ENCODE measurements at regions of chr10 and their contacts with region 1.

Region 1: DNA sequence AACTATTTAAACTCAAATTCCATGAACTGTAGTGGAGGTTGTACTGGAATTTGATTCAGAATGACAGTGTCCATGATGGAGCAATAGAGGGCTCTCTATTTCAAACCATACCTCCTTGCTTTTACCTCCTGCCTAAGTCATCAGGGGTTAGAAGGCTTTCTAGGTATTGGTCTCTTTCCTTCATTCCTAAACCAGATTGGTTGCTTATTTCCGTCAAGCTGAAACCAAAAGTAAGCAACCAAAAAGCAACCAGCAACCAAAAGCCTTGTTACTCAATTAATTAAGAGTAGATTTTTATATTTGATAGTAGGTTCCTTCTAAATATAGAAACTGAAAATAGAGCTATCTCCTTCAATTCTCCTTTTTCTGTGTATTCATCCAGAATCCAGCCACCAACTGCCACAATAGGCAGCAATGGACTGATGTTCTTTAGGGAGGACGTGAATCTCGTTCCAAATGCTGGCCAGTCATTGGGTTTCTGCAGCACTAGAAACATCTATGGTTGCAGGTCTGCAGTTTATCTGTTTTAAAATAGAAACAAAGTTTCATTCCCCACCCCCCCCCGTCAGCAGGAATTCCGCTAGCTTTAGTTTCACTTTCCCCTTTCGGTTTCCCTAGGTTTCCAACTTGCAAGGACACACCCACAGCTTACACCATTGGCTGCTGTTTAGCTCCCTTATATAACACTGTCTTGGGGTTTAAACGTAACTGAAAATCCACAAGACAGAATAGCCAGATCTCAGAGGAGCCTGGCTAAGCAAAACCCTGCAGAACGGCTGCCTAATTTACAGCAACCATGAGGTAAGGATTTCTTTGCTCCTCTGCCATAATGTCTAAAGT is at the start of gene IFIT1:
- DNase-seq: peak; percentile 75
- ATAC-seq: peak; percentile 87
- H3K4me3 ChIP-seq: peak within 1 kb of the TSS; percentile 78
- H3K27ac ChIP-seq: peak within 1 kb of the TSS; percentile 13
- H3K4me1 ChIP-seq: peaks cover 18% of the 10 kb centered on the region
- H3K27me3 ChIP-seq: no peaks in the 10 kb centered on the region
- CTCF ChIP-seq: peak; percentile 18; the same call in 1 of the 2 replicates
- total RNA-seq, gene IFIT1: 14.1 and 19.6 TPM in 2 replicates

Region 2: GRCh38 chr10:89114846-89115625 is 277.1 kb before region 1 on chr10:
- CTCF ChIA-PET with region 1: no interaction called
- POLR2A ChIA-PET with region 1: no interaction called
- intact Hi-C with region 1: no loop called
- DNase-seq: no peak
- ATAC-seq: no peak
- H3K4me3 ChIP-seq: no peak overlapping the region
- H3K27ac ChIP-seq: no peak overlapping the region
- H3K4me1 ChIP-seq: no peaks in the 10 kb centered on the region
- H3K27me3 ChIP-seq: no peaks in the 10 kb centered on the region
- CTCF ChIP-seq: no peak

Region 3: DNA sequence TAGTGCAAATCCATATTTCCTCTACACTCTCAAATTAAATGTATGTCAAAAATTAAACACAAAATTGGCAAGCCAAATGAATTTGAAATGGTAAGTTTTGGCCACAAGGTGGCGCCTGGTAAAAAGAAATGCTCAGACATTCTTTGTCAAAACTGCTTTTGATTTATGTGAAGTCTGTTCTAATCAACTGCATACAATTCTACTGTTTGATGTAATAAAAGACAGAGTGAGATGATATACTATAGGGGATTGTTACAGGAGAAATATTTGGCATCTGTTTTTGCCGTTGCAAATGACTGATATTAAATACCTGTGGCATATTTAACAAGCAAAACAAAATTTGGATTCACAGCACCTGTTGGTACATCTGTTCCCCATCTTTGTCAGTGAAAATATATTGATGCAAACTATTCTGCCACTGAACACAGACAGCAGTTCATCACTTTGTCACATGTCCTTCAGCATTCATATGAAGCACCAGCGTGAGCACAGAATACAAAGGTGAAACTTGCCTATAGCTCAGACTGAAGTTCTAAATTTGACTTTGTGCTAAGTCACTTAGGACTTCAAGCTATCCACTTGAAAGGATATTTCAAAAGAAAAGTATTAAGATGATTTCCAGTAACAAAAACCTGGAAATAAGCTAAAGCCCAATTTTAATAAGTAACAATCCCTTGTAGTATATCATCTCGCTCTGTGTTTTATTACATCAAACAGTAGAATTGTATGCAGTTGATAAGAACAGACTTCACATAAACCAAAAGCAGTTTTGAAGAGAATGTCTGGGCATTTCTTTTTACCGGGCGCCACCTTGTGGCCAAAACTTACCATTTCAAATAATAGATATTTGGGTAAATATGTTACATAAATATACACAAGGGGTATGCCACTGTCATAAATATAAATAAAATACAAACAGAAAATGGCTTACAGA is 174.8 kb before region 1 on chr10:
- CTCF ChIA-PET with region 1: no interaction called
- POLR2A ChIA-PET with region 1: interaction called, 9 read pairs
- intact Hi-C with region 1: loop called (anchors 1 kb)
- DNase-seq: peak; percentile 73
- ATAC-seq: peak; percentile 43; the same call in 1 of the 2 replicates
- H3K4me3 ChIP-seq: no peak overlapping the region
- H3K27ac ChIP-seq: no peak overlapping the region
- H3K4me1 ChIP-seq: peaks cover 6% of the 10 kb centered on the region; the same call in 1 of the 2 replicates
- H3K27me3 ChIP-seq: no peaks in the 10 kb centered on the region
- CTCF ChIP-seq: peak; percentile 75

Region 4: DNA sequence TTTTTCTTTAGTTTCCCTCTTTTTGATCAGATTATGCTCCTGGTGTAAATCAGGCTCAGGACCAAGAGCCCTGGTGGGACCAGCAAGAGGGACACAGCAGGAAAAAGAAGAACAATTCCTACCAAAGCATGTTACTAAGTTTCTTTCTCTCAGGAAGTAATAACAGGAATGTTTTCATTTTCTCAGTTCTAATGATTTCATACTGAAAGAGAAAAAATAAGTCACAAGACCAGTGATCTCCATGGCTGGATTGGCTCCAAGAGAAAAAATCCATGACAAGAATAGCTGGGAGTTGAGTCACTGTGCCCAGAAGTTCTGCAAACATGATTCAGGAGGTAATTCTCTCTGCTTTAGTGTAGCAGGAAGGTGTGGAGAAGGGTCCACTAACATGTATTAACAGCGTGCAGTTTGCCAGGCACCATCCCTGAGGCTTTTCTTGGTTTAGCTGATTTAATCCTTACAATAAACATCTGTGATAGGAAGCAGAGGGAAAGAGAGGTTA is 114.1 kb before region 1 on chr10:
- CTCF ChIA-PET with region 1: interaction called, 17 read pairs
- POLR2A ChIA-PET with region 1: no interaction called
- intact Hi-C with region 1: no loop called
- DNase-seq: peak; percentile 98
- ATAC-seq: peak; percentile 85
- H3K4me3 ChIP-seq: peak overlapping the region; percentile 28; the same call in 1 of the 2 replicates
- H3K27ac ChIP-seq: peak overlapping the region; percentile 96
- H3K4me1 ChIP-seq: peaks cover 71% of the 10 kb centered on the region
- H3K27me3 ChIP-seq: no peaks in the 10 kb centered on the region
- CTCF ChIP-seq: no peak

Region 5: GRCh38 chr10:89301721-89302445 is 90.3 kb before region 1 on chr10 and contains the start of gene IFIT2:
- CTCF ChIA-PET with region 1: no interaction called
- POLR2A ChIA-PET with region 1: no interaction called
- intact Hi-C with region 1: loop called (anchors 5 kb)
- DNase-seq: peak; percentile 71
- ATAC-seq: peak; percentile 67
- H3K4me3 ChIP-seq: peak within 1 kb of the TSS; percentile 66
- H3K27ac ChIP-seq: peak within 1 kb of the TSS; percentile 79
- H3K4me1 ChIP-seq: peaks cover 30% of the 10 kb centered on the region
- H3K27me3 ChIP-seq: no peaks in the 10 kb centered on the region
- CTCF ChIP-seq: no peak
- total RNA-seq, gene IFIT2: 6.9 and 8.6 TPM in 2 replicates

Region 6: GRCh38 chr10:89363729-89364442 is 28.3 kb before region 1 on chr10:
- CTCF ChIA-PET with region 1: interaction called, 12 read pairs
- POLR2A ChIA-PET with region 1: interaction called, 22 read pairs
- intact Hi-C with region 1: loop called (anchors 1 kb)
- DNase-seq: no peak
- ATAC-seq: no peak
- H3K4me3 ChIP-seq: no peak overlapping the region
- H3K27ac ChIP-seq: no peak overlapping the region
- H3K4me1 ChIP-seq: no peaks in the 10 kb centered on the region; the same call in 1 of the 2 replicates
- H3K27me3 ChIP-seq: no peaks in the 10 kb centered on the region
- CTCF ChIP-seq: no peak

Region 7: DNA sequence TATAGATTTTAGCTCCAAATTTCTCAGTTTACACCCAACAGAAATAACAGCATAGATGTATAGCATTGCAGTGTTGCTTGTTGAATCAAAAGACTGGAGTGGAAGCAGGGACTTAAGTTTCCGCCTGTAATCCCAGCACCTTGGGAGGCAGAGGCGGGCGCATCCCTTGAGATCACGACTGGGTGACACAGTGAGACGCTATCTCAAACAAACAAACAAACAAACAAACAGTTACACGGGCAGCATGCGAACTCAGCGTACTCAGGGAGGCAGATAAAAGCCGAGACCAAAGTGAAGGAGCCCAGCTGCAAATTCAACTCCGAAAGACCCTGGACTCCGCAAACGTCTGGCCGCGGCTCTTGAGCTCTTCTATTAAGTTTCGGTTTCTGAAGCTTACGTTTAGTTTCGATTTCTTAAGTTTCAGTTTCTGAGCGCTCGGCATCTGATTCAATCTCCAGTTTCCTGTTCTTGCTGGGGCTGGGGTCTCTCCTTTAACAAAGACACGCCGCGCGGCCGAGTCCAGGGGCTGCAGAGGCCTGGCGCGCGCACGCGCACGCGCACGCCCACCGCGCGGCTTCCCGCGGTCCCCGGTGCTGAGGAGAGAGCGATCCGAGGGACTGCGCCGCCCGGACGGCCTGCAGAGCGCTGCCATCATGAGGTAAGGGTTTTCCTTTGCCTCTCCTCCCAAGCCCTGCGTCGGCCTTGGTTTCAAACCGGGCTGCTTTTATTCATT is 22.2 kb after region 1 on chr10 and contains the start of gene IFIT5:
- CTCF ChIA-PET with region 1: interaction called, 3 read pairs
- POLR2A ChIA-PET with region 1: interaction called, 4 read pairs
- intact Hi-C with region 1: loop called (anchors 2 kb)
- DNase-seq: peak; percentile 56
- ATAC-seq: peak; percentile 79
- H3K4me3 ChIP-seq: peak within 1 kb of the TSS; percentile 80
- H3K27ac ChIP-seq: peak within 1 kb of the TSS; percentile 71
- H3K4me1 ChIP-seq: peaks cover 31% of the 10 kb centered on the region
- H3K27me3 ChIP-seq: no peaks in the 10 kb centered on the region
- CTCF ChIP-seq: no peak
- total RNA-seq, gene IFIT5: 8.9 and 10.7 TPM in 2 replicates

Region 8: DNA sequence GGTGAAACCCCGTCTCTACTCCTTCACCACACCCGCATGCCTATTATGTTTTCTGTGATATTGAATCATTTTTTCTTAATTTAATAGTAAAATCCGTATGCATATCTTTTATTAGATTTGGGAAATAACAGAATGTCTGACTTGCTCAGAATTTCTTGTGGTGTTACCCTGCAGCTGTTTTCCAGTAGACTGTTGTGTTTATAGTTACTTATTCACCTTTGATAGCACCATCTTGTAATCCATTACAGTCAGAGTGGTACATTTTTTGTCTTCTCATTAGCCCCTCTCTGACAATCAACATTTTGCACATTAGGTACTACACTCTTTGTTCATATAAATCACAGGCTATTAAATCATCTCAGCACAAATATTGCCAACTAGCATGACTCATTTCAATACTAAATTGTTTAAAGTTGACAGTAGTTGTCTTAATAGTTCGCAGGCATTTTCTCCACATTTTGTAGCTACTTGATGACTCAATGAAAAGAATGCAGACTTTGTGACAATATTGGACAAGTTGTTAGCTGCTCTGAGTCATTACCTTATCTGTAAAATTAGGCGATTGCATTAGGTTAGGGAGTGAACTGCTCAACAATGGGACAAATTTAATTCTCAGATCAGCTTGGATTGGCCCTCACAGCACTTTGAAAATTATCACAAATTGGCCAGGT is 161.1 kb after region 1 on chr10:
- CTCF ChIA-PET with region 1: no interaction called
- POLR2A ChIA-PET with region 1: no interaction called
- intact Hi-C with region 1: no loop called
- DNase-seq: peak; percentile 92
- ATAC-seq: peak; percentile 69
- H3K4me3 ChIP-seq: no peak overlapping the region
- H3K27ac ChIP-seq: peak overlapping the region; percentile 85
- H3K4me1 ChIP-seq: peaks cover 48% of the 10 kb centered on the region
- H3K27me3 ChIP-seq: no peaks in the 10 kb centered on the region
- CTCF ChIP-seq: no peak

Region 9: GRCh38 chr10:89701238-89702120 is 309.3 kb after region 1 on chr10 and contains the start of gene KIF20B:
- CTCF ChIA-PET with region 1: interaction called, 4 read pairs
- POLR2A ChIA-PET with region 1: interaction called, 28 read pairs
- intact Hi-C with region 1: no loop called
- DNase-seq: peak; percentile 94
- ATAC-seq: peak; percentile 98
- H3K4me3 ChIP-seq: peak within 1 kb of the TSS; percentile 82
- H3K27ac ChIP-seq: peak within 1 kb of the TSS; percentile 38
- H3K4me1 ChIP-seq: peaks cover 19% of the 10 kb centered on the region
- H3K27me3 ChIP-seq: no peaks in the 10 kb centered on the region
- CTCF ChIP-seq: 0 out of 2 replicates have a peak, but pooled peaks have one; percentile 20
- total RNA-seq, gene KIF20B: 10.8 and 12.6 TPM in 2 replicates

Measured in PC-3 (cell line).